PC-9 (cell line): ENCODE measurements at regions of chr10 and their contacts with region 1.

Region 1: DNA sequence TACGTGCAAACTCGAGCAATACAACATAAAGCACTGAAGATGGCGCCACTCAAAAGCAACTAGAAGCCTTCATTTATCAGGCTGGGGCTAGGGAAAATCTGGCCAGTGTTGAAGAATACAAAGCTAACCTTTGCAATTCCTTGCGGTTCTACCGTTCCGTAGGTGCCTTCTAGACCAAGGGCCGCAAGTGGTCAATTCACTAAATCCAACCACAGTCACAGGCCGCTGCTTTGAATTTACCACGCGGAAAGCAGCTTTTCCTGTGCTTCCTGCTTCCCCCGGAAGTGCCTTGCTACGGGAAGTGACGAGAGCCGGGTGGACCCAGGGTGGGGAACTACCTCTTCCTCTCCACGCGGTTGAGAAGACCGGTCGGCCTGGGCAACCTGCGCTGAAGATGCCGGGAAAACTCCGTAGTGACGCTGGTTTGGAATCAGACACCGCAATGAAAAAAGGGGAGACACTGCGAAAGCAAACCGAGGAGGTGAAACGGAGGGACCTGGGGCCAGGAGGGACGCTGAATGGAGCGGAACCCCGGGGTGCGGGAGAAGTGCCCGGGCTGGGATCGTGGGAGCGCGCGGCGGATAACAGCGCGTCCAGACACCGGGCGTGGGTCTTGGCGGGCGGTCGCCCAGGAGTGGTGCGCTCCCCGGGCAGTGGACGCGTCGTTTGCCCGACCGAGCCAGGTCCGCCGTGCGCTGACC is at the start of gene DDX21:
- DNase-seq: peak; percentile 88 to 92
- H3K4me3 ChIP-seq: peak within 1 kb of the TSS; percentile 85
- H3K27ac ChIP-seq: peak within 1 kb of the TSS; percentile 86
- H3K4me1 ChIP-seq: peaks cover 29% of the 10 kb centered on the region
- H3K27me3 ChIP-seq: no peaks in the 10 kb centered on the region
- CTCF ChIP-seq: peak; percentile 81
- total RNA-seq, gene DDX21: 65.8 and 88.0 TPM in 2 replicates

Region 2: GRCh38 chr10:68067029-68067428 is 889.0 kb before region 1 on chr10:
- CTCF ChIA-PET with region 1: no interaction called
- POLR2A ChIA-PET with region 1: no interaction called
- intact Hi-C with region 1: no loop called
- DNase-seq: no peak
- H3K4me3 ChIP-seq: no peak overlapping the region
- H3K27ac ChIP-seq: 0 out of 2 replicates have a peak overlapping the region, but pooled peaks have one; percentile 10
- H3K4me1 ChIP-seq: peaks cover 30% of the 10 kb centered on the region
- H3K27me3 ChIP-seq: no peaks in the 10 kb centered on the region
- CTCF ChIP-seq: no peak

Region 3: DNA sequence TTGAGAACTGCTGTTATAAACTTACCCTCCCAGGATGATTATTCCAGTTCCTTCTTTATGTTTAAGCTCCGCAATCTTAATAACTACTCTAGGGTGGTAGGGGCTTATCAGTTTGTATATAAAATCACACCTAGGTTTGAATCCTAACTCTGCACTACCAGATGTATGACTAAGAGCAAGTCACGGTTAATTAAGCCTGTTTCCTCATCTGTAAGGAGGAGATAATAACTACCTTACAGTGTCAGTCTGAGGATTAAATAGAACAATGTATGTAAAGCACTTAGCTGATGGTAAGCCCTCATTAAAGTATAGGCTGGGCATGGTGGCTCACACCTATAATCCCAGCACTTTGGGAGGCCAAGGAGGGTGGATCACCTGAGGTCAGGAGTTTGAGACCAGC is 493.4 kb before region 1 on chr10:
- CTCF ChIA-PET with region 1: no interaction called
- POLR2A ChIA-PET with region 1: interaction called, 10 read pairs
- intact Hi-C with region 1: no loop called
- DNase-seq: no peak
- H3K4me3 ChIP-seq: no peak overlapping the region
- H3K27ac ChIP-seq: no peak overlapping the region
- H3K4me1 ChIP-seq: no peaks in the 10 kb centered on the region
- H3K27me3 ChIP-seq: no peaks in the 10 kb centered on the region
- CTCF ChIP-seq: no peak

Region 4: DNA sequence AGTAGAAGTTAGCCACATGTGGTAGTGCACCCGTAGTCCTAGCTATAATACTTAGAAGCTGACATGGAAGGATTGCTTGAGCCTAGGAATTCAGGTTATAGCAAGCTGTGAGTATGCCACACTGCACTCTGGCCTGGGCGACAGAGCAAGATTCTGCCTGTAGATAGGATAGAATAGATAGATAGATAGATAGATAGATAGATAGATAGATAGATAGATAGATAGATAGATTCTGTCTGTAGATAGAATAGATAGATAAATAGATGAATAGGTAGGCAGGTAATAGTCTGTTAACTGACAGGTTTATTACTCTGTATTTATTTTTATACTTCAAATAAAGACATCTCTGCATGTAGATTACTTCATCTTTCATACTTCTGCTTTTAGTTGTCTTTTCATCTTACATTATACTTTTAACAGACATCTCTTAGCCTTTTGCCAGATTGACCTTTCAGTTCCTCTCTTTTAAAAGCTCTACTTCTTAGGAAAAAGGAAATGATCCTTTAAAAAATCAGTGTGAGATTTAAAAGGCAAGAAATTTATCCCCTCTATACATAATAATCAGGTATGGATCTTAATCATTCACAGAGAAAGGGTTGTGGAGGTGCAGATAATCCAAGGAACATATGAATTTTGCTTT is 203.2 kb before region 1 on chr10:
- CTCF ChIA-PET with region 1: no interaction called
- POLR2A ChIA-PET with region 1: no interaction called
- intact Hi-C with region 1: no loop called
- DNase-seq: no peak
- H3K4me3 ChIP-seq: no peak overlapping the region
- H3K27ac ChIP-seq: no peak overlapping the region
- H3K4me1 ChIP-seq: no peaks in the 10 kb centered on the region
- H3K27me3 ChIP-seq: no peaks in the 10 kb centered on the region
- CTCF ChIP-seq: no peak